Activated CD4-positive, alpha-beta memory T cell treated with anti-CD3 and anti-CD28 coated beads for 36 hours (primary cell): ENCODE measurements at regions of chrX and their contacts with region 1.

Region 1: DNA sequence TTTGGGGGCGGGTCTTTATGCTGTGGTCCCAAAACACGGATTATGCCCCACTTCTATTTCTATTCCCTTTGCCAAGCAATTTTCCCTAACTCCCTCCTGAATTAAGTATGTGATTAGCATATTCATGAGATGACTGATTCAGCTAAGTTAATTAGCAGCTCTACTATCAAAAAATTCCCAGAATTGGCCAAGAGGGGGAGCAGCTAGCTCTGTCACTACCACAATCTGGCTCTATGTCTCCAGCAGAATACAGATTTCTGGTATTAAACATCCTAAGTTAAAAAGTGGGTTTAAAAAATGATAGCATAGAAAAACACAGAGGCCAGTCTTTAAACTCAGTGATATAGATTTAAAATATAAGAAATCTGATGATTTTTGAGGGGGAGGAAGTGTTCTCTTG is 80.3 kb downstream of the GPC4 start:
- DNase-seq: no peak
- H3K4me3 Mint-ChIP-seq: no peak overlapping the region
- H3K27ac Mint-ChIP-seq: no peak overlapping the region
- H3K4me1 Mint-ChIP-seq: no peaks in the 10 kb centered on the region
- H3K27me3 Mint-ChIP-seq: no peaks in the 10 kb centered on the region

Region 2: DNA sequence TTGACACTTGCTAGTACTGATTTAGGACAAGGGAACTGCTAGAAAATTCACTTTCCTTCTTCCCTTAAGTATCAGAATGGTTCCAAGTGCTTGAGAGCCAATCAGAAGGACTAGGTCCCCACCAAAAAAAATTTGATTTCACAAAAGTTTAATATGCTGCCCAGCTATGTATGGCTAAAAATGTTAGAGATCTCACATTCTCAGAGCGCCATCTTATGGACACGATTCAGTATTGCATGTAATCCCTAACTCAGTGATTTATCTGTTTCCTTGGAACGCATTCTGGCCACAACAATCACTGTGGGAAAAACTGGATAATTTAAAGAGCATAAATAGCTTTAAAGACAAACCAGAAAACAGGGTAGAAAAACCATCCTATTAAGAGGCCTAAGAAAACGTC is 335.4 kb after region 1 on chrX:
- CTCF ChIA-PET with region 1: interaction called, 4 read pairs
- POLR2A ChIA-PET with region 1: no interaction called
- intact Hi-C with region 1: loop called (anchors 2 kb)
- DNase-seq: no peak
- H3K4me3 Mint-ChIP-seq: no peak overlapping the region
- H3K27ac Mint-ChIP-seq: no peak overlapping the region
- H3K4me1 Mint-ChIP-seq: no peaks in the 10 kb centered on the region
- H3K27me3 Mint-ChIP-seq: no peaks in the 10 kb centered on the region